Activated CD8-positive, alpha-beta T cell treated with anti-CD3 and anti-CD28 coated beads, Interleukin-2, amount 10 ng/mL, durations not matched to agents 7 days and 5 days (primary cell): ENCODE measurements at regions of chr21 and their contacts with region 1.

Region 1: DNA sequence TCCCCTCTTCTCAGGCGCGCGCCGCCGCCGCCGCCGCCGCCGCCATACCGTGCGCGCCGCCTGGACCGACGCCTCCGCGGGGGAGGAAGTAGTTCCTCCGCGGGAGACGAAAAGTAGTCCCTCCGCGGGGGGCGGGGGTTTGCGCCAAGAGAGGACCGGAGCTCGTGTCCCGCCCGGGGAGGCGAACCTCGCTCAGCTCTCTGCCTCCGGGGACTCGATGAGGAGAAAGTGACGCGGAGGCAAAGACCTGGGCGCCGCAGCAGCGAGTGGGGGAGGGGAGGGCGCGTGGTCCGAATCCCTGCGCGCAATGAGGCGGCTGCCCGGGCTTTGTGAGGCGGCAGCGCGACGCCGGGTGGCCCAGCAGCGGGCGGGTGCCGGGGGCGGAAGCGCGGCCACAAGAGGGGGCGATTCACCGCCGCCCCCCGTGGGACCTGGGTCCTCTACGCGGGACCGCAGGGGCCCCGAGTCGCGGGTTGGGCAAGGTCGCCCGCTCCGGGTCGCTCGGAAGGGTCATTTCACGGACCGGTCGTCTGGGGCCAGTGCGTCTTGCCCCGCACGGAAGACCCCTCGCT is at the start of gene BRWD1:
- DNase-seq: peak; percentile 78
- ATAC-seq: peak; percentile 62
- H3K4me3 Mint-ChIP-seq: peak within 1 kb of the TSS; percentile 87
- H3K27ac Mint-ChIP-seq: peak within 1 kb of the TSS; percentile 95
- H3K4me1 Mint-ChIP-seq: peaks cover 32% of the 10 kb centered on the region
- H3K27me3 Mint-ChIP-seq: peaks cover 8% of the 10 kb centered on the region
- total RNA-seq, gene BRWD1: 31.9 to 36.0 TPM

Region 2: GRCh38 chr21:39183237-39184007 is 130.2 kb before region 1 on chr21 and contains the start of gene PSMG1:
- CTCF ChIA-PET with region 1: interaction called, 3 read pairs
- POLR2A ChIA-PET with region 1: interaction called, 23 read pairs
- DNase-seq: peak; percentile 95
- ATAC-seq: peak; percentile 94
- H3K4me3 Mint-ChIP-seq: peak within 1 kb of the TSS; percentile 97
- H3K27ac Mint-ChIP-seq: peak within 1 kb of the TSS; percentile 98
- H3K4me1 Mint-ChIP-seq: peaks cover 35% of the 10 kb centered on the region
- H3K27me3 Mint-ChIP-seq: no peaks in the 10 kb centered on the region
- total RNA-seq, gene PSMG1: 69.0 to 74.5 TPM

Region 3: GRCh38 chr21:39300587-39300986 is 13.1 kb before region 1 on chr21:
- CTCF ChIA-PET with region 1: interaction called, 4 read pairs
- POLR2A ChIA-PET with region 1: interaction called, 12 read pairs
- DNase-seq: no peak
- ATAC-seq: no peak
- H3K4me3 Mint-ChIP-seq: no peak overlapping the region
- H3K27ac Mint-ChIP-seq: no peak overlapping the region
- H3K4me1 Mint-ChIP-seq: peaks cover 14% of the 10 kb centered on the region
- H3K27me3 Mint-ChIP-seq: no peaks in the 10 kb centered on the region

Region 4: DNA sequence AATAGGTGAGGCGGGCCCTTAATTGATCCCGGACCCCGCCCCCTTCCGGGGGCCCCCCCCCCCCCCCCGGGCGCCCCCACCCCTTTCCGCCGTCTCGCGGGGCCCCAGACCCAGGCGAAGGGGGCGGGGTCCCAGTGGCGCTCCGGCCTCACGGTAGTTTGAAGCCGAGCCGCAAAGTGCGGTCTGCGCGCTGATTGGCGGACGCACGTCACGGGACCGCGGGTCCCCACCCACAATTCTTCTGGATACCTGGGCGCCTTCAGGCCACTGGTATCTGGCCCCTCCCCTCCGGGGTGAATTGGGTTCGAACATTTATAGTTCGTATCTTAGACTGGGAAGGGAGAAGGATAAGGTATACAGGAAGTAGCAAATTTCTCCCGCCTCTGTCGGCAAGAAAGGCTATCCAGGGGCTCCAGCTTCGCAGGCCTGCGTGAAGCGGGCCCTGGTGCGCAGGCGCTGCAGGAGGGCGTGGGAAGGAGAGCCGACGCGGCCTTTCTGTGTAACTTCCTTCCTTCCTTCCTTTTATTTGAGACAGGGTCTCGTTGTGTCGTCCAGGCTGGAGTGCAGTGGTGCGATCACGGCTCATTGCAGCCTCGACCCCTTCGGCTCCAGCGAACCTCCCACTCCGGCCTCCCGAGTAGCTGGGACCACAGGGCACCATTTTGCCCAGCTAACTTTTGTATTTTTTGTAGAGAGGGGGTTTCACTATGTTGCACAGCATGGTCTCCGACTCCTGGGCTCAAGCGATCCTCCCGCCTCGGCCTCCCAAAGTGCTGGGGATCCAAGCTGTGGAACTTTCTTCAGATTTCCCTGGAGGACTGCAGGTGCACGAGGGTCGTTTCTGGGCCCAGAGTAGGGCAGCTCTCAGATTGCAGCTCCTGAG is 35.8 kb after region 1 on chr21:
- CTCF ChIA-PET with region 1: interaction called, 9 read pairs
- POLR2A ChIA-PET with region 1: interaction called, 77 read pairs
- DNase-seq: peak; percentile 98
- ATAC-seq: peak; percentile 88
- H3K4me3 Mint-ChIP-seq: peak overlapping the region; percentile 98
- H3K27ac Mint-ChIP-seq: peak overlapping the region; percentile 100
- H3K4me1 Mint-ChIP-seq: peaks cover 38% of the 10 kb centered on the region
- H3K27me3 Mint-ChIP-seq: peaks cover 7% of the 10 kb centered on the region

Region 5: DNA sequence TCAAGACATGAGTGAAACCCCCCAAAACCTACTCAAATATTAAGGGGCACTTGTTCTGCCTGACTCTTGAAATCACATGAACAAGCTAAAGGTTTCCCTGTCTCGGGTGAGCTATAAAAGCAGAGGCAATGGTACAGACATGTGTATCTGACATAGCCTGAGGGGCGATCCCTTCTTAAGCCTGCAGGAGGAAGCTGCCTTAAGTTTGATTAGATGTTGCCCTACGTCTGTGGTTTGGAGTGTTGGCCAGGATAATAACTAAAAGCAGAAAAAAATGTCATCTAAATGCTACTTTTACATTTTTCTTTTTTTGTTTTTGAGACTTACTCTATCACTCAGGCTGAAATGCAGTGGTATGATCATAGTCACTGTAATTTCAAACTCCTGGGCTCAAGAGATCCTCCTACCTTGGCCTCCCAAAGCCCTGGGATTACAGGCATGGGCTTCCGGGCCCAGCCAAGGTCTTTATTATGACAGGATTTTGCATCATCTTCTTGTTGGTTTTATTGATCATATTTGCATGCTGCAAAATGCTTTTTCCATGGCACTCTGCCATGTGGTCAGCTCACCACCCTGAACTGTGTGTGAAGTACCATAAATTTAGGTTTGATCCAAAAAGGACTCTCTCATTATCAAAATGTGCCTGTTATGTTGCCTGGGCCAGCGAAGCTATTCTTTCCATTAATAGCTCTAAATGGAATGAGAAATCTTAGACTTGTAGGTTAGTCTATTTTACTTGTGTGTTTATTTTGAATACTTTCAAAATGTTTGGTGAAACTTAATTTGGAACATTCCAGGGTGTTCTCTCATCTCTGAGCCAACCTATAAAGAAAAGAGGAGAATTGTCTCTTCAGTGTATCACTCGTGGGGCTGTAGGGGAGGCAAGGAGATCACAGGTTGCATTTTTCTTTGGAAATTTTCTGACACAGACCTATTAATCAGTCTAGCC is 50.2 kb after region 1 on chr21:
- CTCF ChIA-PET with region 1: no interaction called
- POLR2A ChIA-PET with region 1: no interaction called
- DNase-seq: no peak
- ATAC-seq: no peak
- H3K4me3 Mint-ChIP-seq: no peak overlapping the region
- H3K27ac Mint-ChIP-seq: no peak overlapping the region
- H3K4me1 Mint-ChIP-seq: no peaks in the 10 kb centered on the region
- H3K27me3 Mint-ChIP-seq: peaks cover 8% of the 10 kb centered on the region

Region 6: DNA sequence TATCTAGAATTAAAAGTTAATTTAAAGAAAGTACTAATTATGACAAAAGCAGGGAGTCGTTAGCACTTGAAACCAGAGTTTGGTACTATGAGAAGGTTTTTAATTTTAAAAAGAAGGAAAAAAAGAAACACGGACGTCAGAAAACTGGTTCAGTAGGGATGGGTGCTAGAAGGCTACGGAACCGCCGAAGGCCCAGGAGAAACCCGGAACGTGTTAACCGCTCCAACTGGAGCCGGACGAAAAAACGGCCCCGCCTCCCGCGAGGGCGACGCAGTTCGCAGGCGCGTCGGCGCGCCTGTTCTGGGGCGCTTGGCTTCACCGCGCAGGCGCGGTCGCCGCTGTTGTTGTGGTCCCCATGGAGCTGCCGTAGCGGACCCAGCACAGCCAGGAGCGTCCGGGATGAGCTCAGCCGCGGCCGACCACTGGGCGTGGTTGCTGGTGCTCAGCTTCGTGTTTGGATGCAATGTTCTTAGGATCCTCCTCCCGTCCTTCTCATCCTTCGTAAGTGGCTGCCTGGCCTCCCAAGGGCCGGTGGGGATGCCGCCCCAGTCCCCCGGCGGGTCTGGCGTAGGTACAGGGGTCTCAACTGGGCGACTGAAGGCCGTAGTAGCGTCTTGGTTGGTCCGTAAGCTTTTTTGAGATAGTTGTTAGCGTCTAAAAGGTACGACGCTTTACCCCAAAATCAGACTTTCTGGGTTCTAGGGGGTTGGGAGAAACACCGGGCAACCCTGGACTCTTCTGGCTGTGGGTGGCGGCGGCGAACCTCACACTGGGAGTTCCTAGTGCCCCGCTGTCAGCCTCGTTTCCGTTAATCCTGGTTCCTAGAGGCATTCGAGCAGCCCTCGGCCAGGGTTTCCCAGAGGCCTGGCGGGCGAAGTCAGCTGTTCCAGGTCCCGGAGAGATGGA is 66.6 kb after region 1 on chr21:
- CTCF ChIA-PET with region 1: no interaction called
- POLR2A ChIA-PET with region 1: interaction called, 10 read pairs
- DNase-seq: peak; percentile 95
- ATAC-seq: peak; percentile 99
- H3K4me3 Mint-ChIP-seq: peak overlapping the region; percentile 88
- H3K27ac Mint-ChIP-seq: peak overlapping the region; percentile 91
- H3K4me1 Mint-ChIP-seq: peaks cover 22% of the 10 kb centered on the region
- H3K27me3 Mint-ChIP-seq: peaks cover under 1% of the 10 kb centered on the region